PC-9 (cell line): ENCODE measurements at regions of chr18 and their contacts with region 1.

Region 1: GRCh38 chr18:36688020-36688965 is 140.5 kb downstream of the TPGS2 start:
- DNase-seq: peak; percentile 58 to 64
- H3K4me3 ChIP-seq: no peak overlapping the region
- H3K27ac ChIP-seq: no peak overlapping the region
- H3K4me1 ChIP-seq: no peaks in the 10 kb centered on the region
- H3K27me3 ChIP-seq: no peaks in the 10 kb centered on the region
- CTCF ChIP-seq: peak; percentile 82

Region 2: DNA sequence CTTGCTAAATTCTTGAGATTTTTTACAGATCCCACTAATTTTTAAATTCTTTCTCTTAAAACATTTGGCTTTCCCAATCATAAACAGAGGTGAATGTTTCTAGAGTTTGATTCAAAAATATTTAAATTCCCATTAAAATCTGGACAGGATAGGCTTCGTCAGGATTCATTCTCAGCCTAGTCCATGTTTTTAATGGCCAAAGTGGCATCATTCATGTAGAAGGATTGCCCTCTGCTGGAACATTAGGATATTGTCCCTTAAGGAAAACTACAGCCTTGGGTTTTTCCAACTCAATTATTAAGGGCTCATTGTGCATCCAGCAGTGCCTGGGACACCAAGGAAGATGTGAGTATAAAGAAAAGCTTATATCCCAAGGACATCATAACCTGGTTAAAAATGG is 68.8 kb after region 1 on chr18:
- CTCF ChIA-PET with region 1: interaction called, 4 read pairs
- POLR2A ChIA-PET with region 1: no interaction called
- intact Hi-C with region 1: loop called (anchors 2 kb)
- DNase-seq: no peak
- H3K4me3 ChIP-seq: no peak overlapping the region
- H3K27ac ChIP-seq: no peak overlapping the region
- H3K4me1 ChIP-seq: peaks cover 7% of the 10 kb centered on the region; the same call in 1 of the 2 replicates
- H3K27me3 ChIP-seq: no peaks in the 10 kb centered on the region
- CTCF ChIP-seq: peak; percentile 76